ENCODE measurements at regions of chr10 and their contacts with region 1.

Region 1: DNA sequence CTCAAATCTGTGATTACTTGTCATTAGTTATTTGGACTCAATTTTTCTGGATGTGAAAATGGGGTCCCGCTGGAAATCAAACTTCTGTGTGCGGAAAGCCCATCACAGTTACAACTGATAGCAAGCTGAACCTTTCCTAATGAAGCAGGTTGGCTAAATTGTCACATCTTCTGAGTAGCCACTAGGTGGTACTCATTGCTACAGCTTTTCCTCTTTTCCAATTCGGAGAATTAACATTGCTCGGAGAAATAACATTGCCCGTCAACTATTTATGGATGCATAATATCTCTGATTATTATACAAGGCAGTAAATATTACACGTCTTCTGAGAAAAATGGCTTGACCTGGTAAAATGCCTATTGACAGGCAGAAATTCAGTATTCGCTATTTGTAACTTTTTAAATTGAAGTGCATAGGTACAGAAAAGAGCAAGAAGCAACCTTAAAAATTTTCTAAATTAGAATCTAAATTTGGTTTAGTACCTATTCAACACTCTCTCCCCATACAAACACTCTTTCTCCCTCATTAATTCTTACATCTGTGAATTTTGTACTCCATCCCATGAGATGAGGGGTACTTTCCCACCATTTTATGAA is 17.3 kb upstream of the BLOC1S2 start:
- DNase-seq: peak; percentile 15
- H3K4me3 ChIP-seq: no peak overlapping the region
- H3K27ac ChIP-seq: no peak overlapping the region
- H3K4me1 ChIP-seq: no peaks in the 10 kb centered on the region
- H3K27me3 ChIP-seq: no peaks in the 10 kb centered on the region
- CTCF ChIP-seq: peak; percentile 70 to 76

Region 2: DNA sequence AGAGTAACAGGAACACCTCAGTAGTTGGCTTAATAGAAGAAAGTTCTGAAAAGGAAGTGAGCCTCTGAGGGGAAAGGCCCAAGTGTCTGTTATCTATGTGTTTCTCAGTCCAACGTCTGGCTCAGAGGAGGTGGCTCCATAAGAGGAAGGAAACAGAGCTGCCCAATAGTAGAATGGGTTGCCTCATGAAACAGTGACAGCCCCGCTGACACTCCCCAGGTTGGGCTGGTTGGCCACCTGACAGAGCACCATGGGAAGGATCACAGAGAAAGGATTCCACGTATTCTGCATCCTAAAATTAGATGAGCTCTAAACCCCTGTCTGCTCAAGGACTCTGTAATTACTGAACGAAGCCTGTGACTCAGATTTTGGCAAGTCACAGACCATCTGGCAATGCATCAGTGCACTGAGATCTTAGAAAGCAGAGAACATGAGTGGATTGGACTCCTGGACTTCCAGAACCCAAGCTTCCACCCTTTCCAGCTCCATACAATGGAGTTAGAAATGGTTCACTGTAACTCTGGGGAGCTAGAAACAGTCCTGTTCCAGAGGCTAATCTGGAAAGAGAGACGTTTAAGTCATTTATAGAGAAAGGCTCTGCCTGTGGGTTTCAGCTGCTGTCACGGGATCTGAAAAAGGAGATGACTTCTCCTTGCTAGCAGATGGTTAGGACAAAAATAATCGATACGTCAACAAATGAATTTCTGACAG is 23.3 kb after region 1 on chr10:
- CTCF ChIA-PET with region 1: no interaction called
- dilution Hi-C with region 1: no loop called
- in situ Hi-C with region 1: no loop called
- intact Hi-C with region 1: no loop called
- DNase-seq: no peak
- H3K4me3 ChIP-seq: no peak overlapping the region
- H3K27ac ChIP-seq: no peak overlapping the region
- H3K4me1 ChIP-seq: no peaks in the 10 kb centered on the region
- H3K27me3 ChIP-seq: peaks cover 12% of the 10 kb centered on the region
- CTCF ChIP-seq: no peak

Region 3: DNA sequence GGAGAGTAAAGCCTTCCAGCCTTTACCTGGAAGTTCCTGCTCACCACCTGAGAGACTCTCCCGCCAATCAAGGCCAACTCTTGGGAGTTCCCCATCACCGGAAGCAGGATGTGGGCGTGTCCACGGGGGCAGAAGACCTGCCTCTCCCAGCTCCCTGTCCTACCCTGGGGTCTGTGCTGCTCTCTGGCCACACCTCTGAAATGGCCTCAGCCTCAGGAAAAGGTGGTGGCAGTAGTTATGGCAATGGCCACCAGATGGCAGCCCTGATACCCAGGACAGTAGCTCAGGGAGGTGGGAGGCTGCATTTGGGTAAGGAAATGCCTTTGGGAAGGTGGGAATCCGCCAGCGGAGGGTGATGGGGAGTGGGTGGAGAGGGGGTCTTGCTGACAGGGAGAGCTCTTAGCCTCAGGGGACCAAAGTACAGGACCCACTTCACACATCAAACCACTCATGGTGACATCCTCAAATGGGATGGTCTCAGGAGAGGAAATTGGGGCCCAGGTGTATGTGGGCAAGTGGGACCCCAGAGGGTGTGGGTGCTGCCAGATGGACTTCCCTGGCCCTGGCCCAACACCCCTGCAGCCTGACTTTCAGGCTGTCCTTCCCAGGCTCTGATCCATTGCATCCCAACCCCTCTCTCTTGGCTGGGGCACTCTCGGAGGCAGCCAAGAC is 791.9 kb after region 1 on chr10:
- CTCF ChIA-PET with region 1: interaction called, 12 read pairs
- dilution Hi-C with region 1: no loop called
- in situ Hi-C with region 1: no loop called
- intact Hi-C with region 1: no loop called
- DNase-seq: peak; percentile 82
- H3K4me3 ChIP-seq: no peak overlapping the region
- H3K27ac ChIP-seq: no peak overlapping the region
- H3K4me1 ChIP-seq: peaks cover 24% of the 10 kb centered on the region
- H3K27me3 ChIP-seq: no peaks in the 10 kb centered on the region
- CTCF ChIP-seq: peak; percentile 95